Activated T-helper 2 cell treated with anti-CD3 and anti-CD28 coated beads, Interferon-gamma antibody, Interleukin-2, Interleukin-4, amounts not matched to agents 10 μg/mL and 5 μg/mL and 100 μg/mL, durations not matched to agents 14 hours and 24 hours and 36 hours (primary cell): ENCODE measurements at regions of chr6 and their contacts with region 1.

Region 1: DNA sequence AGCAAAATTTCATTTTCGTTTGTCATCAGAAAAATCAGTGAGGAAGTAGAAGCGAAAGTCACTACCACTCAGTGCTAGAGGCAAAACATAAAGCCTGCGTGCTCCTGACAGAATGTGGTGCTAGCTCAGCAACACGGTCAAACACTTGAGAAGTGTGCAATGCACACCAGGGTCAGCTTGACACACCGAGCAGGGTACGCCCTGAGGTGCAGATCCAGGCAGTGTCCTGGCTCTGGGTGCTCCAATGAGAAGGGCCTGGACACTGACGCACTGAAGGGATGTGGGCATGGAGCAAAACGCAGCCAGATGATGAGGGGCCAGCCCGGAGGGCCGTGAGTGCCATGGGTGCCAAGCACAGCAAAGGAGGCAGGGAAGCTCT is 5.9 kb downstream of the RNASET2 start:
- DNase-seq: peak; percentile 36
- H3K4me3 Mint-ChIP-seq: peak overlapping the region; percentile 73
- H3K27ac Mint-ChIP-seq: peak overlapping the region; percentile 86
- H3K4me1 Mint-ChIP-seq: peaks cover 54% of the 10 kb centered on the region
- H3K27me3 Mint-ChIP-seq: no peaks in the 10 kb centered on the region

Region 2: GRCh38 chr6:166342349-166343149 is 607.9 kb before region 1 on chr6 and contains the start of gene SFT2D1:
- intact Hi-C with region 1: loop called (anchors 5 kb)
- DNase-seq: peak; percentile 81
- H3K4me3 Mint-ChIP-seq: peak within 1 kb of the TSS; percentile 89
- H3K27ac Mint-ChIP-seq: peak within 1 kb of the TSS; percentile 86
- H3K4me1 Mint-ChIP-seq: peaks cover 4% of the 10 kb centered on the region
- H3K27me3 Mint-ChIP-seq: peaks cover 2% of the 10 kb centered on the region
- total RNA-seq, gene SFT2D1: 54.5 and 59.5 TPM in 2 replicates

Region 3: GRCh38 chr6:166775180-166776081 is 175.0 kb before region 1 on chr6:
- intact Hi-C with region 1: no loop called
- DNase-seq: peak; percentile 35
- H3K4me3 Mint-ChIP-seq: no peak overlapping the region
- H3K27ac Mint-ChIP-seq: no peak overlapping the region
- H3K4me1 Mint-ChIP-seq: peaks cover 3% of the 10 kb centered on the region
- H3K27me3 Mint-ChIP-seq: peaks cover 18% of the 10 kb centered on the region

Region 4: GRCh38 chr6:166786704-166787293 is 163.6 kb before region 1 on chr6:
- intact Hi-C with region 1: loop called (anchors 1 kb)
- DNase-seq: no peak
- H3K4me3 Mint-ChIP-seq: no peak overlapping the region
- H3K27ac Mint-ChIP-seq: no peak overlapping the region
- H3K4me1 Mint-ChIP-seq: no peaks in the 10 kb centered on the region
- H3K27me3 Mint-ChIP-seq: peaks cover 11% of the 10 kb centered on the region

Region 5: GRCh38 chr6:166862287-166862977 is 88.0 kb before region 1 on chr6:
- intact Hi-C with region 1: loop called (anchors 5 kb)
- DNase-seq: no peak
- H3K4me3 Mint-ChIP-seq: peak overlapping the region; percentile 77
- H3K27ac Mint-ChIP-seq: no peak overlapping the region
- H3K4me1 Mint-ChIP-seq: peaks cover 7% of the 10 kb centered on the region
- H3K27me3 Mint-ChIP-seq: peaks cover 39% of the 10 kb centered on the region

Region 6: DNA sequence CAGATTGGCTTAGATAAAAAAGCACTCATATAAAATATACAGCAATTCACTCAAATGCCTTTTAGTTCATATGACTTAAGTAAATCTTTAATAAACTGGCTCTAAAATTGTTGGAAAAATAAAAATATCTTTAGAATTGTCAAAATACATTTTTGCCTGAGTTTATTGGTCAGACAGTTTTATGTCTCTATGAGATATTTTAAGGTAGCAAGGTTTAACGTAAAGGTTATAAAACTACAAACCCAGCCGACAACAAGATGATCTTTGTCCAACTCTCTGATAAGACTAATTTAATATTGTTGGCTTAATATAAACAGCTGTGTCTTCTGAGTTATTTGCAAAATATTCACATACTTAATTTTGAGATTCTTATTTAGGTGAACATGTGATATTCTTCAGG is 33.6 kb before region 1 on chr6:
- intact Hi-C with region 1: no loop called
- DNase-seq: no peak
- H3K4me3 Mint-ChIP-seq: no peak overlapping the region
- H3K27ac Mint-ChIP-seq: no peak overlapping the region
- H3K4me1 Mint-ChIP-seq: no peaks in the 10 kb centered on the region
- H3K27me3 Mint-ChIP-seq: no peaks in the 10 kb centered on the region

Region 7: GRCh38 chr6:166989427-166990032 is 39.1 kb after region 1 on chr6:
- intact Hi-C with region 1: loop called (anchors 2 kb)
- DNase-seq: peak; percentile 36
- H3K4me3 Mint-ChIP-seq: no peak overlapping the region
- H3K27ac Mint-ChIP-seq: no peak overlapping the region
- H3K4me1 Mint-ChIP-seq: peaks cover 26% of the 10 kb centered on the region
- H3K27me3 Mint-ChIP-seq: no peaks in the 10 kb centered on the region